Natural killer cell (primary cell): ENCODE measurements at regions of chr12 and their contacts with region 1.

Region 1: GRCh38 chr12:38332814-38333213 is 16.2 kb downstream of the ALG10B start:
- DNase-seq: no peak
- ATAC-seq: no peak
- H3K4me3 ChIP-seq: no peak overlapping the region
- H3K4me3 Mint-ChIP-seq: no peak overlapping the region
- H3K27ac ChIP-seq: no peak overlapping the region
- H3K27ac Mint-ChIP-seq: no peak overlapping the region
- H3K4me1 ChIP-seq: no peaks in the 10 kb centered on the region
- H3K4me1 Mint-ChIP-seq: peaks cover 0 to 6% of the 10 kb centered on the region in 2 donors
- H3K27me3 ChIP-seq: no peaks in the 10 kb centered on the region
- H3K27me3 Mint-ChIP-seq: no peaks in the 10 kb centered on the region
- CTCF ChIP-seq: no peak

Region 2: GRCh38 chr12:39103552-39104165 is 770.8 kb after region 1 on chr12:
- intact Hi-C with region 1: loop called (anchors 2 kb)
- DNase-seq: peak in 1 of 2 donors; percentile 64
- ATAC-seq: peak; percentile 57 to 70 (median 62)
- H3K4me3 ChIP-seq: no peak overlapping the region
- H3K4me3 Mint-ChIP-seq: no peak overlapping the region
- H3K27ac ChIP-seq: no peak overlapping the region
- H3K27ac Mint-ChIP-seq: no peak overlapping the region
- H3K4me1 ChIP-seq: no peaks in the 10 kb centered on the region
- H3K4me1 Mint-ChIP-seq: peaks cover 0 to 6% of the 10 kb centered on the region in 2 donors
- H3K27me3 ChIP-seq: no peaks in the 10 kb centered on the region
- H3K27me3 Mint-ChIP-seq: no peaks in the 10 kb centered on the region
- CTCF ChIP-seq: peak; percentile 60